ENCODE measurements at regions of chr5 and their contacts with region 1.

Region 1: GRCh38 chr5:42591015-42591414 is 165.6 kb upstream of the CCDC152 start:
- DNase-seq: peak; percentile 18 to 77
- ATAC-seq: peak; percentile 75 to 85 (median 84)
- H3K4me3 ChIP-seq: peak overlapping the region; percentile 35
- H3K27ac ChIP-seq: peak overlapping the region; percentile 74
- H3K4me1 ChIP-seq: peaks cover 74% of the 10 kb centered on the region
- H3K27me3 ChIP-seq: no peaks in the 10 kb centered on the region
- CTCF ChIP-seq: no peak

Region 2: GRCh38 chr5:42656651-42657015 is 65.6 kb after region 1 on chr5:
- intact Hi-C with region 1: loop called in 1 of 2 experiments (anchors 5 kb)
- DNase-seq: no peak
- ATAC-seq: peak in 3 of 4 donors; percentile 25 to 64 (median 62)
- H3K4me3 ChIP-seq: peak overlapping the region; percentile 1
- H3K27ac ChIP-seq: no peak overlapping the region
- H3K4me1 ChIP-seq: peaks cover 44% of the 10 kb centered on the region
- H3K27me3 ChIP-seq: no peaks in the 10 kb centered on the region
- CTCF ChIP-seq: no peak